ENCODE measurements at regions of chr5 and their contacts with region 1.

Region 1: GRCh38 chr5:140145818-140146522 is 20.2 kb downstream of the IGIP start:
- DNase-seq: peak; percentile 21 to 66 (median 47)
- ATAC-seq: peak; percentile 70 to 84
- H3K4me3 Mint-ChIP-seq: peak overlapping the region in 9 of 10 donors; percentile 46 to 82 (median 70)
- H3K27ac Mint-ChIP-seq: no peak overlapping the region
- H3K4me1 Mint-ChIP-seq: peaks cover 11 to 32% (median 31%) of the 10 kb centered on the region in 4 donors
- H3K27me3 Mint-ChIP-seq: peaks cover 4 to 32% (median 21%) of the 10 kb centered on the region in 5 donors

Region 2: GRCh38 chr5:140107312-140108083 is 38.5 kb before region 1 on chr5:
- POLR2A ChIA-PET with region 1: interaction called, 14 read pairs
- DNase-seq: peak; percentile 90 to 96 (median 93)
- ATAC-seq: peak; percentile 77 to 85
- H3K4me3 Mint-ChIP-seq: peak overlapping the region; percentile 90 to 98 (median 96)
- H3K27ac Mint-ChIP-seq: peak overlapping the region; percentile 97 to 100 (median 99)
- H3K4me1 Mint-ChIP-seq: peaks cover 22 to 54% (median 47%) of the 10 kb centered on the region in 4 donors
- H3K27me3 Mint-ChIP-seq: peaks cover 0 to 19% (median 2%) of the 10 kb centered on the region in 5 donors

Region 3: GRCh38 chr5:140113699-140114263 is 32.2 kb before region 1 on chr5 and contains the start of gene PURA:
- POLR2A ChIA-PET with region 1: interaction called, 11 read pairs
- DNase-seq: peak; percentile 95 to 99 (median 98)
- ATAC-seq: peak; percentile 88 to 91
- H3K4me3 Mint-ChIP-seq: peak within 1 kb of the TSS; percentile 89 to 99 (median 96)
- H3K27ac Mint-ChIP-seq: peak within 1 kb of the TSS; percentile 92 to 99 (median 98)
- H3K4me1 Mint-ChIP-seq: peaks cover 32 to 83% (median 73%) of the 10 kb centered on the region in 4 donors
- H3K27me3 Mint-ChIP-seq: peaks cover 0 to 9% (median 2%) of the 10 kb centered on the region in 5 donors
- polyA plus RNA-seq, gene PURA: 4.4 to 4.7 (median 4.6) TPM

Measured in naive thymus-derived CD8-positive, alpha-beta T cell (primary cell).